HAP-1 (cell line): ENCODE measurements at regions of chr11 and their contacts with region 1.

Region 1: GRCh38 chr11:44538375-44539054 is 26.9 kb upstream of the CD82 start:
- DNase-seq: peak; percentile 55 to 85
- H3K4me3 ChIP-seq: no peak overlapping the region
- H3K4me1 ChIP-seq: no peaks in the 10 kb centered on the region
- H3K27me3 ChIP-seq: no peaks in the 10 kb centered on the region

Region 2: GRCh38 chr11:44104481-44105294 is 433.8 kb before region 1 on chr11:
- in situ Hi-C with region 1: loop called (anchors 10 kb)
- DNase-seq: no peak
- H3K4me3 ChIP-seq: no peak overlapping the region
- H3K4me1 ChIP-seq: no peaks in the 10 kb centered on the region
- H3K27me3 ChIP-seq: no peaks in the 10 kb centered on the region

Region 3: GRCh38 chr11:44133335-44133946 is 405.1 kb before region 1 on chr11:
- in situ Hi-C with region 1: loop called (anchors 10 kb)
- DNase-seq: peak; percentile 21 to 33
- H3K4me3 ChIP-seq: no peak overlapping the region
- H3K4me1 ChIP-seq: no peaks in the 10 kb centered on the region
- H3K27me3 ChIP-seq: no peaks in the 10 kb centered on the region

Region 4: DNA sequence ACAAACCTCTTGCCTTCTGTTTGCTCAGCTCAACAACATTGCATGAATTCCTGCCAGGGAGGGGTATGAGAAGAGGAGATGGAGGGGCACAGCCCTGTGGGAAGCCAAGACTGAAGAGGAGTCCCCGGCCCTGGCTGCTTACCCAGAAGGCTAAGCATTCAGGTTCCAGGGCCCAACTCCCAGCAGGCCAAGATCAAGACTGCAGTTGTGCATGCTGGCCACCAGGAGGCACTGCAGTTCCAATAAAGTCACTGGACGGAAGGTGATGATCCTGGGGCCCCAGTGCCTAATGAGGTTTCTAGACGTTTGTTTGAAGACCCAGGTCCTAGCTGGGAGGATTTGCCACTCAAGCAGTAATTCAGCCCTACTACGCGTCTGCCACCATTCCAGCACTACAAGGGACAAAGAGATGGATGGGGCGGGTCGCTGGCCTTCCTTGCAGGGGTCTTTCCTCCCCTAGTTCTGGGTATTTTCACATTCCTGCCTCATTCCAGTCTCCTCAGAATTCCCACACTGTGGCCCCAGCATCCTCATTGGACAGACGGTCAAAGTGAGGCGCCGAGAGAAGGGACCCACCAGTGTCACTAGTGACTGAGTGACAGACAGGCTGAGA is 252.1 kb before region 1 on chr11:
- in situ Hi-C with region 1: loop called (anchors 5 kb)
- DNase-seq: peak; percentile 34 to 78
- H3K4me3 ChIP-seq: no peak overlapping the region
- H3K4me1 ChIP-seq: no peaks in the 10 kb centered on the region
- H3K27me3 ChIP-seq: no peaks in the 10 kb centered on the region

Region 5: DNA sequence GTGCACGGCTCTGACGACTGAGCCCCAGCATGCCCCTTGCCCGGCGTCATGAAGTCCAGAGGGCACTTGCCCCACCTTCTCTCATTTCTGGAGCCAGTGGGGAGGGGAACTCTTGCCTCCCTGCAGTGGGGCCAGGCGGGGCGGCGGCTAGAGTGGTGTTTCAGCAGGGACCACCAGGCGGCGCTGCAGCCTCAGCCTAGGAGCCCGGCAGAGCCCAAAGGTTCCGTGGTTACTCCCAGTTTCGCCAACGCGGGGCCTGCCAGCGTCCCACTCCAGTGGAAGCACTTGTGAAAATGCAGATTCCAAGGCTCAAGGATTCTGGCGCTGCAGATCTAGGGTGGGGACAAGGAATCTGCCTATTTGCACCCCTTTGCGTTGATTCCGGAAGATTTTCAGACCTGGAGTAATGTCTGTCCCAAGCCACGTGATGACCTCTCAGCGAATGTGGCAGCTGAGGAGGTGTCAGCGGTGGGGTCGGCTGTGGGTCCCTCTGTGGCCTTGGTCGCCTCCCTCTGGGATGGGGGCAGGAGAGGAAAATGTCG is 82.7 kb after region 1 on chr11:
- in situ Hi-C with region 1: no loop called
- DNase-seq: peak; percentile 51 to 88
- H3K4me3 ChIP-seq: no peak overlapping the region
- H3K4me1 ChIP-seq: no peaks in the 10 kb centered on the region
- H3K27me3 ChIP-seq: no peaks in the 10 kb centered on the region